Right ventricle myocardium inferior (tissue), 1 donor: ENCODE measurements at regions of chr5 and their contacts with region 1.

Region 1: DNA sequence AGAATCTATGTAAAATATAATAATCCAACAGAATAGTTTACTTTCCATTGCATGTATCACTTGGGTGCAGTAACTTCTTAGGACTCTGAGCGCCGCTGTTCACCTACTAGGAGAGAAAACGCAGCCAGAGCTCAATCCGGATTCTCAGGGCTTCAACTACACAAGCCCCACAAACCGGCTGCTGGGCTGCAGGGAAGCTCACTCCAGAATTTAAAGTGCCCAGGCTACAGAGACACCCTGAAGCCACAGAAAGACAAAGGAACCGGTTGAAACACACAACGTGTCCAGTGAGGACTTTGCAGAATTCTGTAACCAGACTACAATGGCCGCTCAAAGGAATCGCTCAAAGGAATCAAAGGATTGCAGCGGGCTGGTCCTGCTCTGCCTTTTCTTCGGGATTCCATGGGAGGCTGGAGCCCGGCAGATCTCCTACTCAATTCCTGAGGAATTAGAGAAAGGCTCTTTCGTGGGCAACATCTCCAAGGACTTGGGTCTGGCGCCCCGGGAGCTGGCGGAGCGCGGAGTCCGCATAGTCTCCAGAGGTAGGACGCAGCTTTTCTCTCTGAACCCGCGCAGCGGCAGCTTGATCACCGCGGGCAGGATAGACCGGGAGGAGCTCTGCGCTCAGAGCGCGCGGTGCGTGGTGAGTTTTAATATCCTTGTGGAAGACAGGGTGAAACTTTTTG is at the start of gene PCDHGA10:
- DNase-seq: no peak
- ATAC-seq: peak; percentile 50
- total RNA-seq, gene PCDHGA10: 4.1 TPM

Region 2: GRCh38 chr5:141557681-141558136 is 144.7 kb after region 1 on chr5:
- intact Hi-C with region 1: loop called (anchors 2 kb)
- DNase-seq: peak; percentile 86
- ATAC-seq: peak; percentile 86